ENCODE measurements at regions of chr17 and their contacts with region 1.

Region 1: DNA sequence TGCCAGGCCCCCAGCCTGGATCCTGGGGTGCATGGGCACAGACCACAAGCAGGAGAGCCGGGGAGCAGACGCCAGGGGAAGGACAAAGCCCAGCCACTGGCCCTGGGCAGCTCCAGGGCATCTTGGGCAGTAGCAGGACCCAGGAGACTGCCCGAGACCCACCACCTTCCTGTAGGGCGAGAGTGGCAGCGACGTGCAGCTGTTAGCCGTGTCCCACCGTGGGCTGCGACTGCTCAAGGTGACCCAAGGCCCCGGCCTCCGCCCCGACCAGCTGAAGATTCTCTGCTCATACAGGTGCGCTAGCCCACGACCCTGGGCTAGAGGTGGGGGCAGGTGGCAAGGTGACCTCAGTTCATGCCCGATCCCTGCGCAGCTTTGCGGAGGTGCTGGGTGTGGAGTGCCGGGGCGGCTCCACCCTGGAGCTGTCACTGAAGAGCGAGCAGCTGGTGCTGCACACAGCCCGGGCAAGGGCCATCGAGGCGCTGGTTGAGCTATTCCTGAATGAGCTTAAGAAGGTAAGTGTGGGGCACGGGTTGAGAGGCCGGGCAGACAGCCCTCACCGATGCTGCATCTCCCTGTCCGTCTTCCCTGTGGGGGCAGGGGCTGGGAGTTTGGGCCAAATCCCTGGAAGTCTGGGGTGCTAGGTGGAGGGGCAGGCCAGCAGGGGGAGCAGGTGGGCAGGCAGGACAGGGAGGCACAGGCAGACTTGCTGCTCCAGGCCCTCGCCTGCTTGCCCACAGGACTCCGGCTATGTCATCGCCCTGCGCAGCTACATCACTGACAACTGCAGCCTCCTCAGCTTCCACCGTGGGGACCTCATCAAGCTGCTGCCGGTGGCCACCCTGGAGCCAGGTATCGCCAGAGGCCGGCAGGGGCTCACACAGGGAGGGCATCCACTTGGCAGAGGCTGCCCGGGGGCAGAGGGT is 13.5 kb upstream of the SMIM5 start:
- DNase-seq: no peak
- H3K4me3 ChIP-seq: no peak overlapping the region
- H3K27ac ChIP-seq: no peak overlapping the region
- H3K4me1 ChIP-seq: no peaks in the 10 kb centered on the region
- H3K27me3 ChIP-seq: no peaks in the 10 kb centered on the region
- CTCF ChIP-seq: peak; percentile 28 to 46

Region 2: GRCh38 chr17:75539967-75540711 is 79.6 kb before region 1 on chr17:
- CTCF ChIA-PET with region 1: no interaction called
- dilution Hi-C with region 1: loop called (anchors 5 kb)
- in situ Hi-C with region 1: no loop called
- intact Hi-C with region 1: no loop called
- DNase-seq: no peak
- H3K4me3 ChIP-seq: no peak overlapping the region
- H3K27ac ChIP-seq: no peak overlapping the region
- H3K4me1 ChIP-seq: peaks cover 10% of the 10 kb centered on the region
- H3K27me3 ChIP-seq: no peaks in the 10 kb centered on the region
- CTCF ChIP-seq: no peak

Region 3: GRCh38 chr17:75652915-75653549 is 33.3 kb after region 1 on chr17:
- CTCF ChIA-PET with region 1: no interaction called
- dilution Hi-C with region 1: no loop called
- in situ Hi-C with region 1: no loop called
- intact Hi-C with region 1: no loop called
- DNase-seq: no peak
- H3K4me3 ChIP-seq: no peak overlapping the region
- H3K27ac ChIP-seq: no peak overlapping the region
- H3K4me1 ChIP-seq: no peaks in the 10 kb centered on the region
- H3K27me3 ChIP-seq: no peaks in the 10 kb centered on the region
- CTCF ChIP-seq: peak; percentile 58 to 61

Measured in mammary epithelial cell (primary cell).